ENCODE measurements at regions of chr14 and their contacts with region 1.

Region 1: DNA sequence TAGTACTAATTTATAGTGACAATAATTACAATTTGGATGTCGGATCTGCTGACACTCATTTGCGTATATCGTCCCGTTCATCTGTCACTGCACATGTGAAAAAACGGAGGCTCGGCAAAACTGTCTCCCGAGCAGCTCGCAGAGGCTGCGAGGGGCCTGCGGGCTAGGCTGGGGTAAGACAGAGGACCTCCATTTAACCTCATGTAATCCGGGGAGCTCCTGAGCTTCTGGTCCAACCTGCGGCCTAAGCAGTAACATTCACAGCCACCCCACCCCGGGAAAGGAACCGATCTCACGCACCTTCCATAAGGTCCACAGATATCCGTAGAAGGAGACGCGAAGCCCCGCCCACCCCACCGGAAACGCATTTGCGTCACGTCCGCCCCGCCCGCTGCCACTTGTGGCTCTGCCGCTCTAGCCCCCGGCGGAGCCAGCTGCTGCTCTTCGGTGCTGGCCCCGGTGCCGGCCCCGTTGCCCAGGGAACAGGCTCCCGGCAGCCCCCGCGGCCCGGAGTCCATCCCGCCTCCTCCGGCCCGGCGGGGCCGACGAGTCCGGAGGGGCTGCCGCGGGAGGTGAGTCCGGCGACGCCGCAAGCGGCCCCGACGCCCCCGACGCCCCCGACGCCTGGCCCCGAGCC is at the starts of genes CINP and TECPR2:
- DNase-seq: peak; percentile 92 to 96
- ATAC-seq: peak; percentile 90 to 97 (median 94)
- H3K4me3 ChIP-seq: peak within 1 kb of the TSS; percentile 71
- H3K4me3 Mint-ChIP-seq: peak within 1 kb of the TSS; percentile 88
- H3K27ac ChIP-seq: peak within 1 kb of the TSS; percentile 74
- H3K27ac Mint-ChIP-seq: no peak within 1 kb of the TSS
- H3K4me1 ChIP-seq: peaks cover 18% of the 10 kb centered on the region
- H3K4me1 Mint-ChIP-seq: peaks cover 19 to 33% of the 10 kb centered on the region in 2 donors
- H3K27me3 ChIP-seq: no peaks in the 10 kb centered on the region
- H3K27me3 Mint-ChIP-seq: no peaks in the 10 kb centered on the region
- CTCF ChIP-seq: no peak
- total RNA-seq, gene CINP: 22.4 to 30.0 (median 23.3) TPM
- total RNA-seq, gene TECPR2: 10.8 to 18.6 (median 15.3) TPM

Region 2: GRCh38 chr14:102509744-102510615 is 147.3 kb after region 1 on chr14 and contains the start of gene ANKRD9:
- intact Hi-C with region 1: loop called (anchors 10 kb)
- DNase-seq: peak; percentile 78 to 88
- ATAC-seq: peak; percentile 81 to 85 (median 82)
- H3K4me3 ChIP-seq: peak within 1 kb of the TSS; percentile 87
- H3K4me3 Mint-ChIP-seq: peak within 1 kb of the TSS; percentile 90
- H3K27ac ChIP-seq: peak within 1 kb of the TSS; percentile 42
- H3K27ac Mint-ChIP-seq: peak within 1 kb of the TSS; percentile 38 to 84
- H3K4me1 ChIP-seq: peaks cover 20% of the 10 kb centered on the region
- H3K4me1 Mint-ChIP-seq: peaks cover 0 to 11% of the 10 kb centered on the region in 2 donors
- H3K27me3 ChIP-seq: no peaks in the 10 kb centered on the region
- H3K27me3 Mint-ChIP-seq: peaks cover 0 to 4% of the 10 kb centered on the region in 2 donors
- CTCF ChIP-seq: no peak
- total RNA-seq, gene ANKRD9: 4.0 to 11.0 (median 9.6) TPM

Region 3: DNA sequence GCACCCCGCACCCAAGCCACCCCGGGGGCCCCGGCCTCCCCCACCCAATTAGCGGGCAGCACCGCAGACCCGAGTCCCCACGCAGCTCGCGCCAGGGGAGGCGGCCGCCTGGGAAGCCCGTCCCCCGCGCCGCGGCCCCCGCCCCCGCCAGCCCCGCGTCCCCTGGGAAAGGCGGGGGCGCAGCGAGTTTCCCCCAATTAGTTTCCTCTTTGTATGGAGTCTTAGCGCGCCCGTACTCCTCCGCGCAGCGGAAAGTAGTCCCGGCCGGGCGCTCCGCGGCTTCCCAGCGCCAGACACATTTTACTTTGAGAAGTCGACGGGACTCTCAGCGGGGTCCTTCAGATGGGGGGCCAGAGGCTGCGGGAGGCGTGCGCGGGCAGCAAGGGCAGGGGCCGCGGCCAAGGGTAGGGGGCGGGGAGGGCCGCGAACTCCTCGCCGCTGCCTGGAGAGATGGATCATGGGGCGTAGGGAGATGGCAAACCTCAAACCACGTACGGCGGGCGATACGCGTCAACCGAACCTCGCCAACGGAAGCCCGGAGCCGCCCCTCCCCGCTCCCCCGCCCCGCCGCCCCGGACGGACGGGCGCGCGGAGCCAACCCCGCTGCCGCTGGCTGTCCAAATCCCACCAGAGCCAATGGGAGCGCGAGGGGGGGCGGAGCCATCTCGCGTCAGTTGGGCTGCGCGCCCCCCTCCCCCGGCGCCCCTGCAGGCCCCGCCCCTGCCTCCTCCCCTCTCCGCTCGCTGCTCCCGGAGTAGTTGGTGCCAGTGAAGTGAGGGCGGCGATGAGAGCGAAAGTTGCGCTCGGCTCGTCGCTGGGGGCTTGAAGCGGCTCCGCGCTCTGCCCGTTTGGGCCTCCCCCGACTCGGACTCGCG is 229.5 kb after region 1 on chr14 and contains the start of gene RCOR1:
- intact Hi-C with region 1: loop called (anchors 2 kb)
- DNase-seq: peak; percentile 94 to 99
- ATAC-seq: peak; percentile 86 to 97 (median 88)
- H3K4me3 ChIP-seq: peak within 1 kb of the TSS; percentile 58
- H3K4me3 Mint-ChIP-seq: peak within 1 kb of the TSS; percentile 98
- H3K27ac ChIP-seq: peak within 1 kb of the TSS; percentile 85
- H3K27ac Mint-ChIP-seq: peak within 1 kb of the TSS; percentile 89 to 93
- H3K4me1 ChIP-seq: peaks cover 17% of the 10 kb centered on the region
- H3K4me1 Mint-ChIP-seq: peaks cover 18 to 24% of the 10 kb centered on the region in 2 donors
- H3K27me3 ChIP-seq: no peaks in the 10 kb centered on the region
- H3K27me3 Mint-ChIP-seq: no peaks in the 10 kb centered on the region
- CTCF ChIP-seq: no peak
- total RNA-seq, gene RCOR1: 20.3 to 36.5 (median 21.8) TPM

Region 4: DNA sequence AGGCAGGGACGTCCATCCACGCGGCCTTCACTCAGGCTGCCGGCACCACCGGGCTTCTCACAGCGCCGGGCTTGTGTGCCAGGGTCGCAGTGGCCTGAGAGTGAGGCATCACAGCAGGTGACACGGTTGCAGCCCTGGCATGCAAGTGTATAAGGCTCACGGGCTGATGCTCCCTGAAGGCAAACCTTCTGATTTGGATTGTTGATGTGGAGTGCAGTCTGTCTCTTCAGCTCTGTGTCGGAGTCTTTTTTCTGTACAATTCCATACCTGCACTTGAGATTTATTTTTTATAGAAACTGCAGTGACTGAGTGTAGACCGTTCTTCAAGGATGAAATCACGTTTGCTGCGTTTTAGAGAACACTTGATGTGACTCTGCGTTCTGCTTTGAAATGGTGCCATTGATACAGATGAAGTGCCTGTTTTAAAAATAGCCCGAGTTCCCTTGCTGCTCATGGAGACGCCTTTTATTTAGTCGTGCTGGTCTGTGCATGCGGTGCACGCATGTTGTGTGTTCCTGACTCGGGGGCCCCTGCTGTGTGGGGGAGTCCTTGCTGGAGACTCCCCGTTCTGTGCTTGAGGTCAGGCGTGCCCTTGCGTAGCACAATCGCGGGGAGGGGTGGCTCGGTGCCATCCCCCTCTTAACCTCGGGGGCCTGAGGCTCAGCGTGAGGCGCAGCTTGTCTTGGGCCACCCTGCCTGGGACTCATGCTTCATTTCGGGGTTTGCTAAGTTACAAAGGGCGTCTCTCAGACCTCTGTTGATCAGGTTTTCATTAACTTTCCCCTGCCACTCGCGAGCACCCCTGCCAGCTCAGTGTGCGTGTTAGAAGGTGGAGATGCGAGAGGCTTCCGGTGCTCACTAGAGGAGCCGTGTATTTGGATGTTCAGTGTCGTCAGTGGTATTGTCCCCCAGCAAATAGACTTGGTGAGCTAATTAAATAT is 538.2 kb after region 1 on chr14:
- intact Hi-C with region 1: no loop called
- DNase-seq: peak in 1 of 2 donors; percentile 53
- ATAC-seq: peak; percentile 66 to 84 (median 83)
- H3K4me3 ChIP-seq: no peak overlapping the region
- H3K4me3 Mint-ChIP-seq: peak overlapping the region; percentile 30
- H3K27ac ChIP-seq: peak overlapping the region; percentile 64
- H3K27ac Mint-ChIP-seq: peak overlapping the region; percentile 63 to 78
- H3K4me1 ChIP-seq: peaks cover 38% of the 10 kb centered on the region
- H3K4me1 Mint-ChIP-seq: peaks cover 31% of the 10 kb centered on the region in 2 donors
- H3K27me3 ChIP-seq: no peaks in the 10 kb centered on the region
- H3K27me3 Mint-ChIP-seq: no peaks in the 10 kb centered on the region
- CTCF ChIP-seq: no peak

Measured in natural killer cell (primary cell).